RWPE1 (cell line): ENCODE measurements at regions of chr11 and their contacts with region 1.

Region 1: GRCh38 chr11:8566613-8567210 is 27.3 kb downstream of the STK33 start:
- DNase-seq: peak; percentile 35
- H3K27ac ChIP-seq: peak overlapping the region; percentile 54
- CTCF ChIP-seq: peak; percentile 76

Region 2: GRCh38 chr11:8192016-8192895 is 374.5 kb before region 1 on chr11:
- CTCF ChIA-PET with region 1: interaction called, 13 read pairs
- POLR2A ChIA-PET with region 1: no interaction called
- DNase-seq: peak; percentile 71
- H3K27ac ChIP-seq: no peak overlapping the region
- CTCF ChIP-seq: peak; percentile 85